AG04449 (cell line): ENCODE measurements at regions of chr1 and their contacts with region 1.

Region 1: GRCh38 chr1:29849038-29849750 is 612.9 kb downstream of the PTPRU start:
- DNase-seq: no peak
- H3K4me3 ChIP-seq: no peak overlapping the region
- CTCF ChIP-seq: peak; percentile 45

Region 2: DNA sequence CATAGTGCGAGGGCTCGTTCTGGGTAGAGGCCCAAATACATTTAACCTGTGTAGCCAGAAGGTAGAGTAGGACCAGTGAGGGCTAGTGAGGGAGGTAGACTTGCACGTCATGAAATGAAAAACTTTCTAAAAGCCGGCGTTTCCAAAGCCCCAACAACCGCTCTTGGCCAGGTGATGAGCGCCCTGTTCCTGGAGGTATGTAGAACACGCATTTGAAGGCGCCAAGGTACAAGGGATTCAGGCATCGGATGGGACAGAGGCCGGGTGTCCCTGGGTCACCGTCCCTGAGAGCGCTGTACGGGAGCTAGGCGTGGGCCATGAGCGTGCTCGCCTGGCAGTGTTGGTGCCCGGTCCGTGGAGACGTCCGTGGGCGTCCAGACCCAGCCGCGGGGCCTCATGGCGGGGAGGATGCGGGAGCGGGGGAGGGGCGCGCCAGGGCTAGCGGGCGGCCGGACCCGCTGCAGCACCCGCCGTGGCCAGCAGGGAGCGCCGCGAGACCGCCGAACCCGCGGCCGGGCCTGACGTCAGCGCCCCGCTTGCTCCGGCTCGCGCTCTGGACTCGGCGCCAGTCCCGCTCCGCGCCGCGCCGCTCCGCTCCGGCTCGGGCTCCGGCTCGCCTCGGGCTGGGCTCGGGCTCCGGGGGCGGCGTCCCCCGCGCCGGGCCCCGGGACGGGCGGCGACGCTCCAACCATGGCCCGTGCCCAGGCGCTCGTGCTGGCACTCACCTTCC is 613.1 kb before region 1 on chr1 and contains the start of gene PTPRU:
- CTCF ChIA-PET with region 1: interaction called, 12 read pairs
- POLR2A ChIA-PET with region 1: no interaction called
- DNase-seq: no peak
- H3K4me3 ChIP-seq: peak within 1 kb of the TSS; percentile 68
- CTCF ChIP-seq: peak; percentile 74

Region 3: GRCh38 chr1:29802181-29803068 is 46.8 kb before region 1 on chr1:
- CTCF ChIA-PET with region 1: no interaction called
- POLR2A ChIA-PET with region 1: no interaction called
- DNase-seq: no peak
- H3K4me3 ChIP-seq: no peak overlapping the region
- CTCF ChIP-seq: no peak

Region 4: DNA sequence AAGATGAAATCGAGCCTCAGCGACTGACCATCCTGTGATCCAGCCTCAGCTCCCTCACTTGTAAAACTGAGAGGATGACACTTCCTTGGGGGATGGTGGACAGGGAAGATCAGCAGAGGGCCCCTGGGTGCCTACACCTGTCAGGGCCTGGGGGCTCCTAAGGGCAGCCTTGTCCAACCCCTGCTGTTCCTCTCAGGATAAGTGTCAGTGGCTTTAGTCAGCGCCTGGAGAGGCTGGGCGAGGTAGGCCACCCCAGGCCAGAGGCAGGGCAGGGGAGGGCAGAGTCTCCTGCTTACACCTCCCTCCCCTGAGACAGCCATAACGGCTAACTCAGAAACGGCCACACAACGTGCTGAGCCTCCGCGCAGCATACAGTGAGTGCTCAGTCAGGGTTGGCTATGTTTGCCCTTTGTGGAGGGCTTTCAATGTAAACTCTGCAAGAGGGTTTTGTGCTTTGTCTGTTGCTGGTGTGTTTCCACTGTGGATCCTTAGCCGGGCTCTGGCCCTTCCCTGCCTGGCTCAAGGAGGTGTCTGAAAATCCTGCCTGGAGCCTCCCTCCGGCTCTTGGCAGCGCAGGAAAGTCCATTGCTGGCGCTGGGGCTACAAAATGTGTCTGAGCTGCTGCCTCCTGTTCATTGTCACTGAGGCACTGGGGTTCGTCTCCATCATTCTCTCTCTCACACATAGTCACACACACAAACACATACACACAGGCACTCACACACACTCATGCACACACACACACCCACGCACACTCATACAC is 24.5 kb before region 1 on chr1:
- CTCF ChIA-PET with region 1: no interaction called
- POLR2A ChIA-PET with region 1: no interaction called
- DNase-seq: no peak
- H3K4me3 ChIP-seq: no peak overlapping the region
- CTCF ChIP-seq: no peak